Heart right ventricle (tissue), 16 donors: ENCODE measurements at regions of chr18 and their contacts with region 1.

Region 1: DNA sequence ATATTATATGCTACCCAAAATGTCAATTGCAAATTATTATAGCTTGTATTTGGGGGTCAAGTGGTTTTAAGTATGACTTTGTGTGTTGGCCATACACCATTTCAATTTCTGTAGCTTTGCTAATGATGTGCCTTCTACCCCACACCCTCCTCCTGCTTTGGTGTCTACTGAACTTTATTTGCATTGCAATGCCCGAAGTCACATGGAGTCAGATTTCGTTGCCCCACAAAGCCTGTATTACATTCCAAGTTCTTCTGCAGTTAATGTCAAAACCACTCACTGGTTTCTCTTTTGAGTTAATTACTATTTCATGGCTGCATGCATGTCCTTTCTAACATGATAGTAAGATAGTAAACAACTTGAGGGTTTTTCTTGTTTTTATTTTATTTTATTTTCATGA is 528.9 kb downstream of the RIT2 start:
- DNase-seq: no peak
- ATAC-seq: no peak
- H3K4me3 ChIP-seq: no peak overlapping the region
- H3K27ac ChIP-seq: no peak overlapping the region
- H3K4me1 ChIP-seq: no peaks in the 10 kb centered on the region
- H3K27me3 ChIP-seq: no peaks in the 10 kb centered on the region
- CTCF ChIP-seq: no peak

Region 2: GRCh38 chr18:42649331-42650035 is 62.9 kb after region 1 on chr18:
- intact Hi-C with region 1: no loop called
- DNase-seq: no peak
- ATAC-seq: no peak
- H3K4me3 ChIP-seq: no peak overlapping the region
- H3K27ac ChIP-seq: no peak overlapping the region
- H3K4me1 ChIP-seq: no peaks in the 10 kb centered on the region
- H3K27me3 ChIP-seq: no peaks in the 10 kb centered on the region
- CTCF ChIP-seq: no peak

Region 3: DNA sequence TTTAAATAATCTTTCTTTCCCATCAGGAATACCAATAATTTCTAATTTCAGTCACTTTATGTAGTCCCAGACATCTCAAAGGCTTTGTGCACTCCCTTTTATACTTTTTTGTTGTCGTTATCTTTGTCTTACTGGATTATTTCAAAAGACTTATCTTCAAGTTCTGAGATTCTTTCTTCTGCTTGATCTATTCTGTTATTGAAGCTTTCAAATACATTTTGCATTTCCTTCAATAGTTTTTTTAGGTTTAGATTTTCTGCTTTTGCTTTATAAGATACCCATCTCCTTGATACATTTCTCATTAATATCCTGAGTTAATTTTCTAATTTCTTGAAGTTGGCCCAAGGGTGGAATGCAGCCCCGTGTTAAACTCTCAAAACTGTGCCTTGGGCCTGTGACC is 96.5 kb after region 1 on chr18:
- intact Hi-C with region 1: loop called in 1 of 10 experiments (anchors 10 kb)
- DNase-seq: no peak
- ATAC-seq: no peak
- H3K4me3 ChIP-seq: no peak overlapping the region
- H3K27ac ChIP-seq: no peak overlapping the region
- H3K4me1 ChIP-seq: no peaks in the 10 kb centered on the region
- H3K27me3 ChIP-seq: no peaks in the 10 kb centered on the region
- CTCF ChIP-seq: no peak

Region 4: DNA sequence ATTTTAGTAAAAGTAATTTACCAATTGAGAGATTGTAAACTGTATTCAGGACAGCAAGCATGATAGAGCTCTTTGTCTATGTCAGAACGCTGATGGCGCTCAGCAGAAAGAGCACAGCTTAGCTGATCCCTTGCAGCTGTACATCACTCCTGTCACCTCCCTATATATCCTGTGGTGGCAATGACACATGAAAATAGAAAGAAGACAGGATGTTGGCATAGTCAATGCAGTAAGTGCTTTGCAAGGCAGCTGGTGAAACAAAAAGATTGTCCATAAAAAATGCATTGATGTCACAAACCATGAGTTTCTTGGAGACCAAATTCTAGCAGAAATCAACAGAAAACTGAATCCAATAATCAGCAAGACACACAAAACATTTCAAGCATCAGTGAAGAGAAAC is 307.4 kb after region 1 on chr18:
- intact Hi-C with region 1: no loop called
- DNase-seq: no peak
- ATAC-seq: no peak
- H3K4me3 ChIP-seq: no peak overlapping the region
- H3K27ac ChIP-seq: no peak overlapping the region
- H3K4me1 ChIP-seq: peaks cover 0 to 7% (median 0%) of the 10 kb centered on the region in 9 donors
- H3K27me3 ChIP-seq: no peaks in the 10 kb centered on the region
- CTCF ChIP-seq: no peak

Region 5: DNA sequence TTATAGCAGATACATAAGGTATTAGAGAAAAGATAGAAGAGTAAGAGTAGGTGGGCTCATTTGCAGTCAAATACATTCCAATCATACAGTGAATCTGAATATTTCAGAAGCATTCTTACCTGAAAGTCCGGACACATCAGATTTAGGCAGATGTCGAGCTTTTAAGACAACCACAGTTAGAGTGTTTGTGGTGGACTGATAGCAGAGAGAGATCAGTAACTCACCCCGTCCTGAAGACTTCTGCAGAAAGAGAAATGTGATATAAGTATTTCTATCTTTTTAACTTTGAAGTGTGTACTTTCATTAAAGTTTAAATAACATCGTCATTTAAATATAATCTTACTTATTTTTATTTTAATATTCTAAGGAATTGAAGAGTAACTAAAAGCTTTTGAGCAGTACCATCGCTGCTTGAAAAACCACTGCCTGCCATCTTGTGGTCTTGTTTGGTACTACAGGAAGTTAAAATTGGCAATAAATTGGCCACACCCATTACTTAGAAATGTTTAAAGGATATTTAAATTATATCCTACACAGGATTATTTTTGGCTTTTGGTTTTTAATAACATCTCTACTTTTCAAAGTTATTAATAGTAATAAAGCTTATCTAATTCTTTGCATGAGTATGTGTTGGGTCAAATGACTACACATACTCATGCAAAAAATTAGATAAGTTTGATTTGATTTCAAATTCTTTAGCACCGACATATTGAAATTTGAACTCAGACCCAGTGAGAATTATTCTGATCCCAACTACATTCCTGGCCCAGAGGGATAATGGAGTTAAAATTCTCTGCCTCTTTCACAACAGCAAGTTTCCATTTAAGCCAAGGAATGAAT is 685.2 kb after region 1 on chr18:
- intact Hi-C with region 1: loop called in 1 of 10 experiments (anchors 10 kb)
- DNase-seq: peak in 1 of 2 donors; percentile 19
- ATAC-seq: no peak
- H3K4me3 ChIP-seq: no peak overlapping the region
- H3K27ac ChIP-seq: no peak overlapping the region
- H3K4me1 ChIP-seq: no peaks in the 10 kb centered on the region
- H3K27me3 ChIP-seq: peaks cover 0 to 13% (median 5%) of the 10 kb centered on the region in 7 donors
- CTCF ChIP-seq: peak; percentile 63 to 88 (median 80)

Region 6: DNA sequence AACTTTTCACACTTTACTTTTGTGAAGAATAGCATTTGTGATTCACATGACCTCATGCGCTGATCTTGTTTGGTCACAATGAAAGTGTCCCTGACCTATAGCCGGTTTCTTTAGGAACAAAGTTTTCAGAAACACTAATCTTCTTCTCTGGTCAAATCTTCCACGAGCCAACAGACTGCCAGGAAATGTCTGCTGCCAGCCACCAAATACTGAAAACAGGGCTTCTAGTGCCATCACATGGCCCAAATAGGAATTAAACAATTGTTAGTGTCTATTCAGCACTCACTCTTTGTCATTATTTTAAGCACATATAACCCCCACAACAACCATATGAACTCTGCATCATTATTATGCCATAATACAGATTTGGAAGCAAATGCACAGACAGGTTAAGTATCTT is 977.2 kb after region 1 on chr18:
- intact Hi-C with region 1: loop called in 1 of 10 experiments (anchors 10 kb)
- DNase-seq: peak in 1 of 2 donors; percentile 11
- ATAC-seq: peak in 2 of 8 donors; percentile 42 to 70
- H3K4me3 ChIP-seq: no peak overlapping the region
- H3K27ac ChIP-seq: no peak overlapping the region
- H3K4me1 ChIP-seq: peaks cover 0 to 5% (median 0%) of the 10 kb centered on the region in 9 donors
- H3K27me3 ChIP-seq: peaks cover 0 to 16% (median 0%) of the 10 kb centered on the region in 7 donors
- CTCF ChIP-seq: peak in 8 of 9 donors; percentile 25 to 61 (median 48)